GM13976 (cell line): ENCODE measurements at regions of chr2 and their contacts with region 1.

Region 1: DNA sequence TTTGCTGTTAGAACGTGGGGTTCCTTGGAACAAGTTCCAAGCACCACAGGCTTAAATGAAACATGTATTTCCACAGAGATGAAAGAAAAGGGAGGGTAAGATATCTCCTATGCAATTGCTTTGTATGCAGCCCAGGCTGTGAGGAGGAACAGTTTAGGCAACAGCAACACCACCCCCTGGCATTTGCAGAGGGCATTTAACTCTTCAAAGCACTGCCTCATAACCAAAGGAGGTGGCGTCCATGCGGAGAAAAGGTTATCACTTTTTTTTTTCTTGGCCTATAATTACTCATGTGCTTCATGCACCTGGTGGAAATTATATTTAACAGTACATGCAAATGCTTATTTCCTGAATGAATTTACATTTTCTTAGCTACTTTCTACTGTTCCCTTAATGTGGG is 286.0 kb downstream of the LPIN1 start:
- DNase-seq: peak; percentile 27
- CTCF ChIP-seq: no peak

Region 2: GRCh38 chr2:11863513-11864328 is 168.7 kb before region 1 on chr2:
- in situ Hi-C with region 1: loop called (anchors 25 kb)
- DNase-seq: peak; percentile 77
- CTCF ChIP-seq: peak; percentile 85

Region 3: DNA sequence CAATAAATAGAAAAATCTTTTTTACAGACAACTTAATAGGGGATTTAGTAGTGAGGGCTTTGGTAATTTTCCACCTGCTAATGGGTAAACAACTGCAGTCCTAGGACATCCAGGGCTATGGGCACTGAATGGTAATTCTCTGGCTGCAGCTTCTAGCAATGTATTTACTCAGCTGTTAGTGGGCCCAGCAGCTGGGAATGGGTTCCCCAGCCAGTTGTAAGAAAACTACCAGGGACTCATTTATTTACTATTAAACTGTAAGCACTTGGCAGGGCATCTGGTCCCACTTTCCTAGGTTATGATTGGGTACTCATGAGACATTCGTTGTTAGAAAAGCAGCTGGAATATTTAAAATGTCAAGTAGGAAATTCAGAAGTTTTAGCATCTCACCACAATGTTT is 320.5 kb after region 1 on chr2:
- in situ Hi-C with region 1: no loop called
- DNase-seq: no peak
- CTCF ChIP-seq: no peak